Naive thymus-derived CD8-positive, alpha-beta T cell (primary cell): ENCODE measurements at regions of chr10 and their contacts with region 1.

Region 1: DNA sequence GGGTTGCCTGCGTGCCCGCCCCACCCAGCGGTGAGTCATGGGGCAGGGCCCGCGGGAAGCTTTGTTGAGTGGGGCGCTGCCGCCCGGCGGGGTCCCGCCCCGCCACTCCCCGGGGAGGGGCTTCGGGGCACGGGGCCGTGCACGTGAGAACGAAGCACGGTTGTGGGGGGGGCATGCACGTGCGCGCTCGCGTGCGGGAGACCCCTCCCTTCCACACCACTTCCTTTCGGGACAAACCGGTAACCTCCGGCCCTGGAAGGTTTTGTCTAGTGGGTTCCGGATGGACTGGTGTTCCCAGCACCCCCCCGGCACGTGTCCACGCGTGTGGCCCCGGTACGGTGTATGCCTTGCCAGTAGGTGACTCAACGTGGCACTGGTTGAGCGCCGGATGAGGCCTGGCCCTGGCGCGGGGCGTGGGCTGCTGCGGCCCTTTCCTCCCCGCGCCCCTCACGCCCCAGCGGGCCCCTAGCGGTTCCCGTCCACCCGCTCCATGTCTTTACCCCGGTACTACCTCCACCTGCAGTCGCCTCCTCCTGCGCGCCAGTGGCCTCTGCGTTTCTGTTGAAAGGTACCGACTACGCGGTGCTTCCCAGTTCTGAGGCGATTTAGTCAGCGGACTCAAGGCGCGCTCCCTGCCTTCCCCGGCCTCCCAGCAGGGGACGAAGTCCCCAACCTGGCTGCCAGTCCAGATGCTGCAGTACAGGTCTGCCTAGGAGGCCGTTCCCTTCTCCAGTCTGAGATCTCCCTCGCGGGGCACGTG is 3.1 kb downstream of the ADIRF start:
- DNase-seq: peak; percentile 88 to 95 (median 92)
- ATAC-seq: peak; percentile 83
- H3K4me3 Mint-ChIP-seq: peak overlapping the region; percentile 80 to 91 (median 86)
- H3K27ac Mint-ChIP-seq: peak overlapping the region; percentile 87 to 98 (median 96)
- H3K4me1 Mint-ChIP-seq: peaks cover 16 to 57% (median 40%) of the 10 kb centered on the region in 4 donors
- H3K27me3 Mint-ChIP-seq: peaks cover 0 to 2% (median 0%) of the 10 kb centered on the region in 5 donors

Region 2: DNA sequence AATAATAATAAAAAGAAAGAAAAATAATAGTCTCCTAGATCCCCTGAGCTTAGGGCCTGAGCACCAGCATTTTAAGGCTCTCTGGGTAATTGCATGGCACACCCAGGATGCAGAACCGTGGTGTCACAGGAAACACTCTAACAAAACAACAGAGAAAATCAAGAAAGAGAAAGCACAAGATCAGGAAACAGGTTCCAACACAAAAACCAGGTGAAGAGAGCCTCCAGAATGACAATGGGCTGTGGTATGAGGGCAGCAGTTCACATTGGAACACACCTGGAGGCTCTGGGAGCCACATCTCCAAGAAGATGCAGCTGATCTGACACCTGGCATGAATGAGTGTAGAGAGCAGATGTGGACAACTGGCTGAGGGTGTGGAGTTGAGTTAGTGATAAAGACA is 21.1 kb before region 1 on chr10:
- POLR2A ChIA-PET with region 1: interaction called, 14 read pairs
- DNase-seq: no peak
- ATAC-seq: peak in 1 of 2 donors; percentile 54
- H3K4me3 Mint-ChIP-seq: peak overlapping the region; percentile 10 to 81 (median 51)
- H3K27ac Mint-ChIP-seq: peak overlapping the region; percentile 74 to 100 (median 92)
- H3K4me1 Mint-ChIP-seq: peaks cover 10 to 27% (median 17%) of the 10 kb centered on the region in 4 donors
- H3K27me3 Mint-ChIP-seq: no peaks in the 10 kb centered on the region

Region 3: DNA sequence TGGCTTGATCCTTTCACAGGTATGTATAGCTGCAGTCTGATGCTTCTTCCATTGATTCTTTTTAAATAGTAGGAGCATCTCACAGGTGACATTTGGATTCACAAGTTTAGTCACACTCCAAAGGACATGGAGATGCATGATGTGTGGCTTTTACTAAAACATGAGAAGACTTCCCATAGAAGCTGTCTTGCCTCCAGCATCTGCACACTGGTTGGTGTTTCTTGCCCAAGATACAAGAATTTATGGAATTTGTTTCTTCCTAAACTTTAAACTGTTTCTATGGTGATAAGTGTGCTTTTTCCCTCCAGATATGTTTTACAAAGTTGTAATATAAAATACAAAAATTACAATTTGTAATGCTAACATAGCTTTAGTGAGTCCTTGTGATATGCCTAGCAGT is 21.0 kb after region 1 on chr10:
- POLR2A ChIA-PET with region 1: no interaction called
- DNase-seq: no peak
- ATAC-seq: no peak
- H3K4me3 Mint-ChIP-seq: no peak overlapping the region
- H3K27ac Mint-ChIP-seq: no peak overlapping the region
- H3K4me1 Mint-ChIP-seq: no peaks in the 10 kb centered on the region
- H3K27me3 Mint-ChIP-seq: peaks cover 0 to 19% (median 10%) of the 10 kb centered on the region in 5 donors

Region 4: DNA sequence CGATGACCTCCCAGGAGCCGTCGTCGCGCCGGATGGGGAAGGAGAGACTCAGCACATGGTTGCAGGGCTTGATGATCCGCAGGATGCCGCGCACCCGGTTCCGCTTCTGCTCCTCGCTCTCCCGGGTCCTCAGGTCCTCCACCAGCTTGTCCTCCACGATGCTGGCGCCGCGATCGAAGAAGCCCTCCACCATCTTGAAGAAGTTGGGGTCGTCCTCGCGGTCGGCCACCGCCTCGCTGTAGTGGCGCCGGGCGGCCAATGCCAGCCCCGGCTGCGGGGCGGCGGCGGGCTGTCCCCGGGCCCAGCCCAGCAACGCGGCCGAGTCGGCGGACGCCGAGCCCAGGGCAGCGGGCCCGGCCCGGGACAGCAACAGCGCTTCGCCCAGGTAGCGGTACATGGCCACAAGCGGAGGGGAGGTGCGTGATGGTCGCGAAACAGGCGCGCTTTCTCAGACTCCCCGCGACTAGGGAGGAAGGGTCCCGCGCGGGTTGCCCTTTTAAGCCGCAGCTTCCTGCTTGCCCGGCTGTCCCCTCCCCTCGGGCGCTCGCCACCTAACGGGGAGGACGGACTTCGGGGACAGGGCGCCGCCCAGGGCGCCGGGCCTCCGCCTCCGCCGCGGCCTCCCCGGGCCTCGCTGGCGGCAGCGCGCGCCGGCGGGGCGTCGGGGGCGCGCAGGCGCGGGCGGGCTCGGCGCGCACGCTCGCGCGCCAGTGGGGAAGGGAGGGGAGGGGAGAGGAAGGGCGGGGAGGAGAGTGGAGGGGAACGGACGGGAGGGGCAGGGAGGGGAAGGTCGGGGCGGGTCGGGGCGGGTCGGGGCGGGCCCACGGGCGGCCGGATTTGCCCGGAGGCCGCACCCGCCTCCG is 123.2 kb after region 1 on chr10 and contains the starts of genes GLUD1 and SHLD2:
- POLR2A ChIA-PET with region 1: interaction called, 26 read pairs
- DNase-seq: peak; percentile 77 to 93 (median 82)
- ATAC-seq: peak; percentile 61 to 62
- H3K4me3 Mint-ChIP-seq: peak within 1 kb of the TSS; percentile 87 to 96 (median 94)
- H3K27ac Mint-ChIP-seq: peak within 1 kb of the TSS; percentile 86 to 97 (median 94)
- H3K4me1 Mint-ChIP-seq: peaks cover 17 to 64% (median 58%) of the 10 kb centered on the region in 4 donors
- H3K27me3 Mint-ChIP-seq: no peaks in the 10 kb centered on the region
- polyA plus RNA-seq, gene GLUD1: 111 to 126 (median 124) TPM
- polyA plus RNA-seq, gene SHLD2: 17.7 to 22.5 (median 18.7) TPM